Mammary epithelial cell (primary cell): ENCODE measurements at regions of chr3 and their contacts with region 1.

Region 1: GRCh38 chr3:98732286-98733052 is 30.7 kb upstream of the ST3GAL6 start:
- DNase-seq: peak; percentile 58
- H3K4me3 ChIP-seq: peak overlapping the region; percentile 88 to 90 (median 89)
- H3K27ac ChIP-seq: peak overlapping the region; percentile 52
- H3K4me1 ChIP-seq: peaks cover 15% of the 10 kb centered on the region
- H3K27me3 ChIP-seq: no peaks in the 10 kb centered on the region
- CTCF ChIP-seq: no peak

Region 2: DNA sequence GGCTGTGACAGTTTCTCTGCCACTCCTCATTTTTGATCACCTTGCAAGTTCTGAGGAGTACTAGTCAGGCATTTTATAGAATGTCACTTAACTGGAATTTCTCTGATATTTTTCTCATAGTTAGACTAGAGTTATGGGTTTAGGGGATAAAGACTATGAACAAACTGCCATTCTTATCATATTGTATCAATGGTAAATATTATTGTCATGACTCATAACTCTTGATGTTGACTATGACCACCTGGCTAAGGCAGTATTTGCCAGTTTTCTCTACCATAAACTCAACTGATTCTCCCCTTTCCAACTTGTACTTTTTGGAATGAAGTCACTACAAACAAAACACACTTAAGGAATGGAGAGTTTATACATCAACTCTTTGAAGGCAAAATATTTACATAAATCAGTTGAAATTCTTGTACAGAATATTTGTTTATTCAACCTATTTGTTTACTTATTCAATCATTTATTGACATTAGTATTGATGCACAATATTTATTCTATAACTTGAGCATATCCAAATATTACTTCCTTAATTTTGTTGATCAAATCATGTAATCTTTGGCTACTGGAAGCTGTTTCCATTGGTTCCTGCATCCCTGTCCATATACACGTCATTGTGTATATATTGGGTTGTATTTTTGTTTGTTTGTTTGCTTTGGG is 292.1 kb before region 1 on chr3:
- CTCF ChIA-PET with region 1: no interaction called
- dilution Hi-C with region 1: no loop called
- in situ Hi-C with region 1: no loop called
- intact Hi-C with region 1: no loop called
- DNase-seq: peak; percentile 22
- H3K4me3 ChIP-seq: no peak overlapping the region
- H3K27ac ChIP-seq: no peak overlapping the region
- H3K4me1 ChIP-seq: peaks cover 4% of the 10 kb centered on the region
- H3K27me3 ChIP-seq: no peaks in the 10 kb centered on the region
- CTCF ChIP-seq: no peak

Region 3: DNA sequence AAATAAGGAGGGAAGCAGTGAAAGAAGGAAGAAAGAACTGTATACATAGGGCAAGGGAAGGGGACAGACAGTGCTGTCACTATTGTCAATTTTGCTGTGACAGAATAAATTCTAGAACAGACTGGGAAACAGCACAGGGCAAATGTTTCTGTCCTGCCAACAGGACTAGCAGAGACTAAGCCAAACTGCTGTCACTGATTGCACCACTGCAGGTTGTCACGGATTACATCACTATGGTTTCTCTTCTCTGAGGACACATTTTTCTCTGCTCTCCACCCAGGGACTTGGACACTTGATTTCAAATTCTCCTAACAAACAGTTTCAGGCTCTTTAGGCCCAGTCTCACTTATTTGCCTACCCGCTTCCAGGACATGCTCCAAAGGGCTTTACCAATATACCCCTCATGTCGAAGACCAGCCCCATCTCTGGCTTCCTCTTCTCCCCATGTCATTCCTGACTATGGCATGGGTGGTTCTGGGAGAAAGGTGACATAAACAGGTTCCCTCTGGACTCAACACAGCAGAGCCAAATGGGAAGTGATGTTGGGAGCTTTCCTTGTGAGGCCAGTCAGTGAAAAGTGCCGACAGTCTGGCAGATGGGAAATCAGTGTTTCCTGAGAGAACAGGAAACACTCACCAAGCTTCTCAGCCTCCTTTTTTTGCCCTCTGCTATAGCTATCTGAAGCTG is 39.5 kb before region 1 on chr3:
- CTCF ChIA-PET with region 1: no interaction called
- dilution Hi-C with region 1: no loop called
- in situ Hi-C with region 1: no loop called
- intact Hi-C with region 1: no loop called
- DNase-seq: no peak
- H3K4me3 ChIP-seq: no peak overlapping the region
- H3K27ac ChIP-seq: no peak overlapping the region
- H3K4me1 ChIP-seq: peaks cover 14% of the 10 kb centered on the region
- H3K27me3 ChIP-seq: no peaks in the 10 kb centered on the region
- CTCF ChIP-seq: no peak

Region 4: DNA sequence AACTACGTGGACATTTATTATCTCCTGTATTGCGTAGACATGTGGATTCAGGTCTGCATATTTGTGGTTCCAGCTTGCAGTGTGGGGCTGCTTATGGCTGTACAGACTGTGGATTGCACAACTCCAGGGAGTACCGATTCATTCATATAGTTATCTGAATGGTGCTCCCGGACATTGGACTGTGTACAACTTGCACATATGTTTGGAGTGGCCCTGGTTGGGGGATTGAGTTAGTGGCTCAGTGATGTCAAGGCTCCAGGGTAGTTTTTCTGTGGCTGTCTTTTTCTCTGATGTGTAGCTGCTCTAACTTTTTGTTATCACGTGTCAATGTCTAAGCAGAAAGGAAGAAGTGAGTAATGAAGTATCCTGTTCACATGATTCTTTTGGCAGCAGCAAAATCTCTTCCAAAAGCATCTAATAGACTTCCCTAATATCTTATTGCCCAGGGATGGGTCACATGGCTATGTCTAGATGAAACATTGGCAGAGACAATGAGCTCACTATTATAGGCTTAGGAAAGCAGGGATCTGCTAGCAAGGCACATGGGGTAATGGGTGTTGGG is 46.5 kb after region 1 on chr3:
- CTCF ChIA-PET with region 1: no interaction called
- dilution Hi-C with region 1: no loop called
- in situ Hi-C with region 1: no loop called
- intact Hi-C with region 1: loop called (anchors 2 kb)
- DNase-seq: peak; percentile 94
- H3K4me3 ChIP-seq: peak overlapping the region in 2 of 3 experiments; percentile 2 to 6
- H3K27ac ChIP-seq: peak overlapping the region; percentile 85
- H3K4me1 ChIP-seq: peaks cover 54% of the 10 kb centered on the region
- H3K27me3 ChIP-seq: no peaks in the 10 kb centered on the region
- CTCF ChIP-seq: no peak